BJ (cell line): ENCODE measurements at regions of chr14 and their contacts with region 1.

Region 1: DNA sequence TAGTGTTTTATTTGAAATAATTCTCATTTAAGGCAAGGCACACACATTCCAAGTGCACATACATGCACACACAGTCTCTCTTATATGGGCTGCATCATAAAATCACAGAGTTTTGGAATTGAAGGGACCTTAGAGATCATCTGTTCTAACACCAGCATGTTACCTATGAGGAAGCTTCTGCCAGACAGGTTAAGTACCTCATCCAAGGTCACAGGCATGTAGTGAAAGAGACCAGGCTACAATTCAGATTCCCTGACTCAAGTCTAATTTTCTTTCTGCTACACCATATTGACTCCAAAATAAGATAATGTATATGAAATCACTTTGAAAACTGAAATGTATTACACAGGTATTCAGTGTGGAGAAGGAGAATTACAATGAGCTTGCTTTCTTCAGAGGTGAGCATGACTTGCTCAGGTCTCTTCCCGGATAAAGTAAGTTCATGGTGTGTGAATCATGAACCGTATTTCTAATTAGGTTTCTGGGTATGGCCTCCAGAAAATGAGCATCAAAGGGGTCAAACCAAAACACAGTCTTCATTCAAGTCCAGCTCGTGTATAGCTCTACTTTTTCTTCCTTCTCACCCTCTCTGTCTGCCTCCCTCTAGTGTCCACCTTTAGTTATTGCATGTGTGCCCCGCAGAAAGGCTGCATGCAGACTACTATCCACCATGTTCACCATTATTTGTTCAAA is 411.9 kb downstream of the FUT8 start:
- DNase-seq: peak; percentile 7
- H3K4me3 ChIP-seq: no peak overlapping the region
- H3K27me3 ChIP-seq: peaks cover 12% of the 10 kb centered on the region; the same call in 1 of the 2 replicates
- CTCF ChIP-seq: peak; percentile 92

Region 2: DNA sequence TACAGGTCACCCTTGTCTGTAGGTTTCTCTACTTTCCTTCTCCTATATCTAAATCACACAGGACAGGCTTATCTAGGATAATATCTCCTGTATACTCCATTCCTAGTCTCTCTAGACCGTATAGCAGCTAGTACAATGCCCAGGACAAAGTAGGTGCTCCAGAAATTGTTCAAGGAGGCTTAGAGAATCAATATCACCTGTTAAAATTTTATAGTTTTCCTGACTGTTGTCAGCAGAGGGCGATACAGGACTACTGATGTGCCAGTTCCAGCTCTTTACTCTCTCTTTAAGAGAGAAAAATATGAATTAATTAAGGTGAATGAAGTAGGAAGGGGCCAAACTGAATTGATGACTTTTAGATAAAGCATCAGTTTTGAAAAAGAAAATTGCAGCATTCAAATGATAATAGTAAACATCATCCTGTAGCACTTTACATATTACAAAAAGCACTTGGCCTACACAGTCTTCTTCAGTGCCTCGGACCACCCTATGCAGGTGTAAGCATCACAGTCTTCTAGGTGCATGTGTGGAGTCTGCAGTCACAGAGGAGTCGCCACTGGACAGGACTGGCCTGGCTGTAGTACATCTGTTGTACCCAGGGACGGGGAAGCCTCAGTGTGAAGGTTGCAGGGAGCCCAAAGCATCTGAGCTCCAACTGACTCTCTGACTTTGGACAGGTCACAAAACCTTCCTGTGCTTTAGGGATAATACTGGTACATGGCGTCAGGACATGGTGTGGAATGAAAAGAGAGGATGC is 660.2 kb before region 1 on chr14:
- CTCF ChIA-PET with region 1: interaction called, 63 read pairs
- POLR2A ChIA-PET with region 1: no interaction called
- DNase-seq: no peak
- H3K4me3 ChIP-seq: no peak overlapping the region
- H3K27me3 ChIP-seq: no peaks in the 10 kb centered on the region
- CTCF ChIP-seq: peak; percentile 57

Region 3: DNA sequence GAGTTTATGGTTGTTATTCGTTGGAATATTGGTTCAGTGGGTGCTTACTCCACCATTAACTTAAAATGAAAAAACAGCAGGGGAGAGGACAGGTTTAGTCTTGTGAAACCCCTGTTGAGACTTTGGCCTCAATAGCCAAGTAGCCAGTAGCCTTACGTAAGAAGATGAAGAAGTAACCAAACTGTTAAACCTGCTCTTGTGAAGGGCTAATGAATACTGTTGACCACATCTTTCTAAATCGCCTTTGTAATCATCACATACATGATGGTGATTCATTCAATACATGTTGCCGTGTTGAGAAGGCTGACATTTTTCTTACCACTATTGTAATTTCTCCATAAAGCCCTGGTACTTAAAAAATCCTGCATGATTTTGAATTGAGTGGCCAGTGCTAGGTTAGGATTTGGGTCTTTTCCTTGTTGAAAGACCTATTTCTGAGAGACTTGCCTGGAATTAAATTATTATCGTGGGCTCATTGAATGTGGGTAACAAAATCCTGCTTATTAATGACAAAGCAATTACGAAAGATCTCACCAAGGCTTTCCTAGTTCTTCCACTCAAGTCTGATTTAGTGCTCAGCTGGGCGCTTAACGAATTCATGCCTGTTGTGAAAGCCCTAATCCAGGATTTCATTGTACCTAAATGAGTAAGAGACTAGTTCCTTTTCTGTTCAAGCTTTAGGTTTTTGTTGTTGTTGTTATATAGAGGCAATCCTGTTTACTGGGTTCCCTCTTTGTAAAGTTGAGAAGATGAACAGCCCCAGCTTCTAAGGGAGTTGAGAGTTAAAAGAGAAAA is 78.8 kb before region 1 on chr14:
- CTCF ChIA-PET with region 1: no interaction called
- POLR2A ChIA-PET with region 1: no interaction called
- DNase-seq: no peak
- H3K4me3 ChIP-seq: no peak overlapping the region
- H3K27me3 ChIP-seq: no peaks in the 10 kb centered on the region
- CTCF ChIP-seq: no peak

Region 4: DNA sequence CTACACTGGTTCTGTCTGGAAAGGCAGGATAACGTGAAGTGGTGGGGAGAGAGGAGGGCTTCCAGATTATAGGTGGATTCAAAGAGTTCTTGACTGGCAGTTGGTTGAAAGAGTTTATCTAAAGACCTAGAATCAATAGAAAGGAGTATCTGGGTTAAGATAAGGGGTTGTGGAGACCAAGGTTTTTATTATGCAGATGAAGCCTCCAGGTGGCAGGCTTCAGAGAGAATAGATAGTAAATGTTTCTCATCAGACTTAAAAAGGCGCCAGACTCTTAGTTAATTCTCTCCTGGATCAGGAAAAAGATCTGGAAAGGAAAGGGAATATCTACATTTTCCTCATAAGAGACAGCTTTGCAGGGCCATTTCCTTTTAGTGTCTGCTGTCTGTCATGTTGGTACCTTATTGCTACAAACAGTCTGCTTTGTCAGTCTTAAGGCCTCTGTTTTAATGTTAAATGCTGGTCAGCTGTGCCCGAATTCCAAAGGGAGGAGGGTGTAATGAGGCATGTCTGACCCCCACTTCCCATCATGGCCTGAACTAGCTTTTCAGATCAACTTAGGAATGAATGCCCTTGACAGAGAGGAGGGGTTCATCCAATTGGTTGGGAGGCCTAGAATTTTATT is 10.6 kb before region 1 on chr14:
- CTCF ChIA-PET with region 1: interaction called, 14 read pairs
- POLR2A ChIA-PET with region 1: no interaction called
- DNase-seq: no peak
- H3K4me3 ChIP-seq: no peak overlapping the region
- H3K27me3 ChIP-seq: no peaks in the 10 kb centered on the region
- CTCF ChIP-seq: no peak

Region 5: GRCh38 chr14:65840118-65840751 is 15.8 kb after region 1 on chr14:
- CTCF ChIA-PET with region 1: interaction called, 24 read pairs
- POLR2A ChIA-PET with region 1: no interaction called
- DNase-seq: no peak
- H3K4me3 ChIP-seq: no peak overlapping the region
- H3K27me3 ChIP-seq: no peaks in the 10 kb centered on the region; the same call in 1 of the 2 replicates
- CTCF ChIP-seq: no peak

Region 6: DNA sequence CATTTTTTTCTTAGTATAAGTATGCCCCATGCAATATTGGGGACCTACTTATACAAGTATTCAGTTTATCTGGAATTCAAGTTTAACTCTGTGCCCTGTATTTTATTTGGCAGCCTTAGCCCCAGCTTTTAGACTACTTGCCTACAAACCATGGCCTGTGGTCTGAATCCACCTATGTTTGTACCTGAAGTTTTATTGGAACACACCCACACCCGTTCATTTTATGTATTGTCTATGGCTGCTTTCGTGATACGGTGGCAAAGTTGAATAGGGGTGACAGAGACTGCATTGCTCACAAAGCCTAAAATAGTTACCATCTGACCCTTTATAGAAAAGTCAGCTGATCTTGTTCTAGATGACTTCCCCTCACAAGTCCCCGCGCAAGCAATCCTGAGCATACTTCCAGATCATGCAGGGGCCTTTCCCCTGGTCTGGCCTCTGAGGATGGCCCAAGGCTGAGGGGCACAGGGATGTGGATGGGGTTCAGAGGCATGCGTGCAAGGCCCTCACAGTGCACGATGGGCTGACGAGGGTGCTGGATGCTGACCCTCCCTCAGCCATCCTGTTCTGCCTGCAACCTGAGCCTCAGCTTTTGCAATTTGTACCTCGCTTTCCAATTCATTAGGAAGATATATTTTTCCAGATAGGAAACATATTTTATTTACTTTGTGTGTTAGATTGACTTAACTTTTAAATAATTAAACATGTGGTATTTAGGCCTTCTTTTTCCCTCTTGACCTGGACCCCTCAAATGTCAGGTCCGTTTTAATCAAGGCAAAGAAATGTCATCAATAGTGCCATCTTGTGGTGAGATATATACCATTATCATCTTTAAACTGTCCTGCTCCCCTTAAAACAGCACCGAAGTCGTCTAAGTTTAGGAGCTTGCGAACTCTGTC is 134.5 kb after region 1 on chr14:
- CTCF ChIA-PET with region 1: interaction called, 12 read pairs
- POLR2A ChIA-PET with region 1: no interaction called
- DNase-seq: no peak
- H3K4me3 ChIP-seq: no peak overlapping the region
- H3K27me3 ChIP-seq: no peaks in the 10 kb centered on the region
- CTCF ChIP-seq: peak; percentile 36